Lower leg skin (tissue), 4 donors: ENCODE measurements at regions of chr21 and their contacts with region 1.

Region 1: DNA sequence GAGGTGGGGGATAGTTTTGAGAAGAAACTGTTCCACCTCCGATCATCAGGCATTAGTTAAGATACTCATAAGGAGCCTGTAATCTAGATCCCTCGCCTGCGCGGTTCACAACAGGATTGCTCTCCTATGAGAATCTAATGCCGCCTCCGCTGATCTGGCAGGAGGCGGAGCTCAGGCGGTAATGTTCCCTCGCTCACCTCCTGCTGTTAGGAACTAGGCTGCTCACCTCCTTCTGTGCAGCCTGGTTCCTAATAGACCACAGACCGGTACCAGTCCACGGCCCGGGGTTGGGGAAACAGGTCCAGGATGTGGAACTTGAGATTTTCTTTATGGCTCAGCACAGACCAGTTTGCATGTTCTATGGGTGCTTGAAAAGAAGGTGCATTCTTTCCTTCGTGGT is 27.2 kb upstream of the FAM3B start:
- DNase-seq: no peak
- H3K4me3 ChIP-seq: no peak overlapping the region
- CTCF ChIP-seq: no peak
- POLR2A ChIP-seq: no peak

Region 2: DNA sequence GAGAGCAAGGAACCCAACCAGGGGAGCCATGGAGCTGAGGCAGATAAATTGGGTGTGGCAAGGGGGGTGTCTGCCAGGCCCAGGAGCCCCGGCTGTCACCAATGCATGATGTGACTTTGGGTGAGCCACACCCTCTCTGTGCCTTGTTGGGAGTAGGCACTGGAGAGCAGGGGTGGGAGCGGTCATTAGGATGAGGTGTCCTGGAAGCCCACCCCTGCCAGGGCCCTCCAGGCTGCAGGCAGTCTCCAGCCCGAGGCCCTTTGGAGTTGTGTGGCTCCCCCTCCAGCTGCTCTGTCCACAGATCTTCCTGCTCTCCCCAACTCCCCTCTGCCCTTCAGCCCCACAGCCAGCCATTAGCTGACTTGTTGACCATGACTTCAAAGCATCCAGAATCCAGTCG is 83.8 kb after region 1 on chr21:
- intact Hi-C with region 1: loop called (anchors 2 kb)
- DNase-seq: peak in 1 of 2 donors; percentile 82
- H3K4me3 ChIP-seq: no peak overlapping the region
- CTCF ChIP-seq: no peak
- POLR2A ChIP-seq: no peak

Region 3: DNA sequence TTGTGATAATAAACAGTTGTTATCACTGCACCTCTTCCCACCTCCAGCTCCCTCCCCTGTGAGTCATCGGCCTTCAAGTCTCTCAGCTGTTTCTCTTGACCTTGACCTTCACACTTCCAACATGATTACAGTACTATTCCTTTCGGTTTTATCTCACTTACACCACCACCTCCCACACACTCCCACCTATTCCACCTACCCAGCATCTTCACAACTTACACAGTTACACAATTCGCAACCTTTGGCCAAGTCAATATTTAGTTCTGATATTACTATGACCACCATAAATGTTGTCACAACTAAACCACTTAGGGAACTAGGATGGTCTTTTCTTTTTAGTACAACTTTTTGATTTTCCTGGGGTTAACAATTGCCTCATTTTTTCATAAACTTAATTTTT is 417.3 kb after region 1 on chr21:
- intact Hi-C with region 1: no loop called
- DNase-seq: no peak
- H3K4me3 ChIP-seq: no peak overlapping the region
- CTCF ChIP-seq: no peak
- POLR2A ChIP-seq: no peak